HCT116 (cell line): ENCODE measurements at regions of chr3 and their contacts with region 1.

Region 1: GRCh38 chr3:5016218-5017161 is 37.3 kb downstream of the BHLHE40 start:
- DNase-seq: peak; percentile 72
- ATAC-seq: peak; percentile 50
- H3K4me3 ChIP-seq: peak overlapping the region in 1 of 2 experiments; percentile 9; a peak in 1 of 4 replicates
- H3K27ac ChIP-seq: peak overlapping the region; percentile 1; the same call in 1 of the 2 replicates
- H3K4me1 ChIP-seq: peaks cover 61 to 99% of the 10 kb centered on the region in 2 experiments
- H3K27me3 ChIP-seq: no peaks in the 10 kb centered on the region
- CTCF ChIP-seq: no peak
- POLR2A ChIP-seq: no peak
- RAD21 ChIP-seq: no peak

Region 2: DNA sequence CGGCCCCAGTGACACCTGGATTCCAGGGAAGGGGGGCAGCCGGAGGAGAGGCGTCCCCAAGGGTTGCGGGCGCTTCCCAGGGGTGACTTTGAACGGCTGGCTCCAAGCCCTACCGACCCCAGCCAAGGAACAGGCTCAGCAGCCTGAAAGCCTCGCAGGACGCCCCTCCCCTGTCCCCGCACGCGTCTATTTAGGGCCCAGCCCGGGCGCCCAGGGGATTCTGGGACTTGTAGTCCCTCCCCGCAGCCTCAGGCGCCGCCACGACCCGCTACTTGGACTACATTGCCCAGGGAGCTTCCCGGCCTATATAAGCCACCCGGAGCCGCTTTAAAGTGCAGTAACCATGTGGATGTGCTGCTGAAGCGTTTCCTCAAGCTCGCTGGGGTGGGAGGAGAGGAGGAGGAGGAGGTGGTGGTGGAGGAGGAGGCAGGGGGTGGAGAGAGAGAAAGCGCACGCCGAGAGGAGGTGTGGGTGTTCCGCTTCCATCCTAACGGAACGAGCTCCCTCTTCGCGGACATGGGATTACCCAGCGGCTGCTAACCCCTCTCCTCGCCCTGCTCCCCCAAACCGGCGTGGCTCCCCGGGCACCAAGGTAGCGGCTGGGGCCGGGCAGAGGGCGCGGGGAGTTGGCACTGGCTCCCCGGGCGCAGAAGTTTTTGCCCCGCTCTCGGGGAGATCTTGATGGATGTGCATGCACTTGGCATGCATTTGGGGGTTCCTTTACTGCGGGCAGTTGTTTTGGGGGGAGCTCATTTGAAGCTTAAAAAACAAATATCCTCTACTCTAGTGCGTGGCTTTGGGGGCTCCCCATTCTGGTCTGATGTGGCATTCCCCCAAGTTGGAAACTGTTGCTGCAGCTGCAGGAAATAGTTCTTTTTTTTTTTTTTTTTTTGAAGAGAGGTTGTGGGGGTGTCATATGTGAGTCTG is 523.2 kb before region 1 on chr3 and contains the start of gene ITPR1:
- CTCF ChIA-PET with region 1: no interaction called
- POLR2A ChIA-PET with region 1: no interaction called
- RAD21 ChIA-PET with region 1: no interaction called
- intact Hi-C with region 1: no loop called
- DNase-seq: peak; percentile 93
- ATAC-seq: peak; percentile 94
- H3K4me3 ChIP-seq: peak within 1 kb of the TSS; percentile 58 to 61
- H3K27ac ChIP-seq: peak within 1 kb of the TSS; percentile 16; the same call in 1 of the 2 replicates
- H3K4me1 ChIP-seq: peaks cover 2 to 19% of the 10 kb centered on the region in 2 experiments; a peak in 2 of 4 replicates
- H3K27me3 ChIP-seq: peaks cover 42% of the 10 kb centered on the region
- CTCF ChIP-seq: no peak
- POLR2A ChIP-seq: peak; percentile 98
- RAD21 ChIP-seq: no peak
- total RNA-seq, gene ITPR1: 9.2 TPM

Region 3: DNA sequence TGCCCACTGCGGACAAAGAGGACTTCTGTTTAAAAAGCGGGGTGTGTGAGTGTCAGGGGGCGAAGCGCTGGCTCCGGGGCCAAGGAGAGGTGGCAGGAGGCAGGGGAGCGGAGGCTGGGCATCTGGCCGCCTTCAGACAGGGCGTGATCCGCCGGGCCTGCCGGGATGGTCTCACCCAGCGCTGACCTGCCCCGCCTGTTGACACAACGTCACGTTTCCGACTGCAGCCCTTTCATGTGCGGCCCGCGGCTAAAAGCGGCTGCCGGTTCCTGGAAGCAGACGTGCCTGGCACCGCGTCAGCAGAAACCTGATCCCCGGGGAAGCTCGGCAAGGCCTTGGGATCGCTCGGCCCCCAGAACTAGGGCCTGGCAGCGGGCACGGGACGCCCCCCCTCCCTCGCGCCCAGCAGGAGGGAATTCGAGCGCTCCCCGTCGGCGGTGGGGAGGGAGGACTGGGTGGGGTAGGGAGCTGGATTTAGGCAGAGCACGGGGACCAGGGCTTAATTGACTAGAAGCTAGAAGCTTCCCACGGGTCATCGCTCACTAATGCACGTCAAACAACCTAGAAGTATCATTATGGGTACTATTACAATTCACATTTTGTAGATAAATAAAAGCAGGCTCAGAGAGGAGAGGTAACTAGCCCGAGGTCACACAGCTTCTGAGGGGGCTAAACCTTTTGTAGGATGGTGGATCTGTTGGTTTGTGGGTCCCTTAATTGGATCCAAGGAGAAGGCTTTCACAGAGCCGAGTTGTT is 29.5 kb before region 1 on chr3:
- CTCF ChIA-PET with region 1: interaction called, 5 read pairs
- POLR2A ChIA-PET with region 1: interaction called, 39 read pairs
- RAD21 ChIA-PET with region 1: interaction called in 1 of 2 experiments, 3 read pairs
- intact Hi-C with region 1: no loop called
- DNase-seq: peak; percentile 98
- ATAC-seq: peak; percentile 84
- H3K4me3 ChIP-seq: peak overlapping the region; percentile 17 to 48; a peak in 3 of 4 replicates
- H3K27ac ChIP-seq: peak overlapping the region; percentile 46
- H3K4me1 ChIP-seq: peaks cover 64 to 88% of the 10 kb centered on the region in 2 experiments
- H3K27me3 ChIP-seq: no peaks in the 10 kb centered on the region
- CTCF ChIP-seq: no peak
- POLR2A ChIP-seq: no peak
- RAD21 ChIP-seq: no peak

Region 4: DNA sequence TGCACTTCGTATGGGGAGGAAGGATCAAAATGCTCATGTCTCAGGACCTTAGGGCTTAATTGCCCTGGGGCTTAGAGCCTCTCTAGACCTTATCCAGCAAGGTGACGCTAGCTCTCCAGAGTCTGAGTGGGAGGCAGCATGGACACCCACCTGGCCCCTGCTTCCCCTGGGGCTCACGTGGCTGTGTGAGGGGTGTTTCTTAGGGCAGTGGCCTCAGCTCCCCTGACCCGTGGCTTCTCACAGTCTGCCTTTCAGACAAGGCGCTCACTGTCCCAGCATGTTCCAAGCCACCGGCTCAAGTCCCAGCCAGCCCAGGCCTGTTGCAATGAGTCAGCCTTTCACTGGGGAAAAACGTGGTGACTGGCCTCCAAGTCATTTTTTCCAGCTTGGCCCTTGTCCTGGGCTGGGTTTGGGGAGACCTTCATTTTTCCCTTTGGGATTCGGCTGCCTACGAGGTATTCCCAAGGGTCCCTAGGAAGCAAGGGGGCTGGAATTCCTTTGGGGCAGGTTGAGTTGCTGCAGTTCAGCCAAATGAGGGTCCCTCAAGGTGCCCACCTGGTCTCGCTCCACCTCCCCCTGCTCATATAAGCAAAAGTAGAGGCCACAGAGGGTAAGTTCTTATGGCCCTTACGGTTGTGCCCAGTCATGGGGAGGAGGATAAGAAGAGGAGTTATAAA is 21.5 kb before region 1 on chr3:
- CTCF ChIA-PET with region 1: no interaction called
- POLR2A ChIA-PET with region 1: interaction called, 17 read pairs
- RAD21 ChIA-PET with region 1: no interaction called
- intact Hi-C with region 1: no loop called
- DNase-seq: peak; percentile 94
- ATAC-seq: peak; percentile 81
- H3K4me3 ChIP-seq: peak overlapping the region in 1 of 2 experiments; percentile 27; a peak in 1 of 4 replicates
- H3K27ac ChIP-seq: peak overlapping the region; percentile 85
- H3K4me1 ChIP-seq: peaks cover 36 to 69% of the 10 kb centered on the region in 2 experiments
- H3K27me3 ChIP-seq: no peaks in the 10 kb centered on the region
- CTCF ChIP-seq: no peak
- POLR2A ChIP-seq: no peak
- RAD21 ChIP-seq: no peak

Region 5: DNA sequence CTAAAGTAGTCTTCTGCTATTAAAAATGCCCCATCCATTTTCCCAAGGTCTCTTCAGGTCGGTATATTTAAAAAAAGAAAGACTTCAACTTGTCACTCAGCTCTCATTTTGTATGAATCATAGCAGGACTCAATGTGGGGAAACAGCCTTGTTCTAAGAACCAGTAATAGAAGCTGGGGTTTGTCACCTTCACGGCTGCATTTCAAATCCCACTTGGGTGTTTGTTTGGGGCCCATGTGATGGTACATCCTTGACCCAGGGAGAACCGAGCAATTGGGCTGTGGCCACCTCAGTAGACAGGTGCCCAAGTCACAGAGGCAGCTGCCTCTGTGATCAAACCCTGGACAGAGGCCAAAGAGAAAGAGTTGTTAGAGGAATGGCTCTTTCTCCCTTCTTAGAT is 35.3 kb after region 1 on chr3:
- CTCF ChIA-PET with region 1: no interaction called
- POLR2A ChIA-PET with region 1: no interaction called
- RAD21 ChIA-PET with region 1: no interaction called
- intact Hi-C with region 1: no loop called
- DNase-seq: no peak
- ATAC-seq: no peak
- H3K4me3 ChIP-seq: no peak overlapping the region
- H3K27ac ChIP-seq: no peak overlapping the region
- H3K4me1 ChIP-seq: peaks cover 0 to 10% of the 10 kb centered on the region in 2 experiments; a peak in 1 of 4 replicates
- H3K27me3 ChIP-seq: no peaks in the 10 kb centered on the region
- CTCF ChIP-seq: no peak
- POLR2A ChIP-seq: no peak
- RAD21 ChIP-seq: no peak

Region 6: DNA sequence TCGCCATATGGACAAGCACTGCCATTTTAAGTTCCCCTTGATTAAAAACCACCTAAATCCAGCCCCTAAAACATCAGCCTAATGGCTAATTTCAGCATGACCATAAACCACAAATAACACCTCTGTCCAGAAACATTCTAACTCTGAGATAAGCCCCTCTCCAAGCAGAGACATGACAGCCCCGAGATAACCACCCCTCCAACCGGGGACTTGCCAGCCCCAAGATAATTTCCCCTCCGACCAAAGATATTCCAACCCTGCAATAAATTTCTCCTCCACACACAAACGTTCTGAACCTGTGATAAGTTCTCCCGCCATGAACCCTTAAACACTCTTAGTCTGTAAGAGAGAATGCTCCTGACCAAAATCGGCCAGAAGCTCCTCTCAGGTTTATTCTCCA is 757.8 kb after region 1 on chr3:
- CTCF ChIA-PET with region 1: no interaction called
- POLR2A ChIA-PET with region 1: no interaction called
- RAD21 ChIA-PET with region 1: no interaction called
- intact Hi-C with region 1: no loop called
- DNase-seq: no peak
- ATAC-seq: no peak
- H3K4me3 ChIP-seq: no peak overlapping the region
- H3K27ac ChIP-seq: no peak overlapping the region
- H3K4me1 ChIP-seq: no peaks in the 10 kb centered on the region
- H3K27me3 ChIP-seq: no peaks in the 10 kb centered on the region
- CTCF ChIP-seq: no peak
- POLR2A ChIP-seq: no peak
- RAD21 ChIP-seq: no peak